ENCODE measurements at regions of chr5 and their contacts with region 1.

Region 1: GRCh38 chr5:64612344-64612961 is 77.8 kb upstream of the SHISAL2B start:
- DNase-seq: peak in 25 of 42 donors; percentile 21 to 79 (median 58)

Region 2: GRCh38 chr5:64147849-64148441 is 464.5 kb before region 1 on chr5:
- intact Hi-C with region 1: loop called (anchors 5 kb)
- DNase-seq: peak in 41 of 42 donors; percentile 16 to 78 (median 54)

Region 3: DNA sequence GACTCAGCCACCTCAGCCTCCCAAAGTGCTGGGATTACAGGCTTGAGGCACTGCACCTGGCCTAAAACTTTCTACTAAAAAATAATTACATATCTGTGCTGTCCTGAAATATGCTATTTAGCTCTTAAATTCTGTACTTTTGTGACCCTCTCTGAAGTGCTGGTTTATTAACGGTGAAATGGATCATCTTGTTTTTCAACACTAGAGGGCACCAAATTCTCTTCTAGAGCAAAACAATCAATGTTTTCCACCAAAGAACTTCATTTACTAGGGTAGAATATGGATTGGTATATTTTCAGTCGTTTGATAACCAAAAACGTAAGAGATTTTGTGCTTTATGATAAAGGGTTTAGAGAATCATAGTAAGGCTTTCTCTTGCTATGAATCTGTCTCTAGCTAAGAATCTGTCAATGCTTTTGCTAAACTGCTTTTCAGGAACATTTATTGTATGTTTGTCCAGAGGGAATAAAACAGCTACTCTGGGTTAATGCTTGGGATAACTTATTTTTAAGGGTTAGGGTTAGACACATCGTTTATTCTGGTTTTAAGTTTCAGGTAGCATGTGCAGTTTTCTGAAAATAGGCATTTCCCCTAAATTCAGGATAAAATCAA is 383.2 kb before region 1 on chr5:
- intact Hi-C with region 1: loop called (anchors 5 kb)
- DNase-seq: peak in 1 of 42 donors; percentile 23

Region 4: DNA sequence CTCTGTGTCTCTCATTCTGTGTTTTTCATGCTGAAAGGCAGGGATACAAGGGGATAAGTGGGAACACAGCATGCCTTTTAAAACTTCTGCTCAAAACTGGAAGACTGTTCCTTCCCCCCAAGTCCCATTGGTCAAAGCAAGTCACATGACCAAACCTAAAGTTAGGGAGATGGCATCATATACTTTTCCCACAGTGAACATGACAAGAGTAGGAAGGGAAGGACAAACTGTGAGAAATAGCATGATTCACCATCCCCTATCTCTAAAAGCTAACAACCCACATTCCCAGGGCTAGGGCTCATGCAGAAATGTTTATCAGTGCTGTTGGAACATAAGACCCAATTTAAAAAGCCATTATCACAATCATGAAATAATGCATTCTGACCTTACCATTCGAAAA is 53.6 kb after region 1 on chr5:
- intact Hi-C with region 1: no loop called
- DNase-seq: no peak